Activated T-helper 1 cell treated with anti-CD3 and anti-CD28 coated beads, Interleukin-12 subunit alpha, Interleukin-12 subunit beta, Interleukin-2, Interleukin-4 antibody, amounts not matched to agents 30 ng/mL and 10 ng/mL and 1 ng/mL, durations not matched to agents 14 hours and 24 hours and 36 hours (primary cell): ENCODE measurements at regions of chr16 and their contacts with region 1.

Region 1: DNA sequence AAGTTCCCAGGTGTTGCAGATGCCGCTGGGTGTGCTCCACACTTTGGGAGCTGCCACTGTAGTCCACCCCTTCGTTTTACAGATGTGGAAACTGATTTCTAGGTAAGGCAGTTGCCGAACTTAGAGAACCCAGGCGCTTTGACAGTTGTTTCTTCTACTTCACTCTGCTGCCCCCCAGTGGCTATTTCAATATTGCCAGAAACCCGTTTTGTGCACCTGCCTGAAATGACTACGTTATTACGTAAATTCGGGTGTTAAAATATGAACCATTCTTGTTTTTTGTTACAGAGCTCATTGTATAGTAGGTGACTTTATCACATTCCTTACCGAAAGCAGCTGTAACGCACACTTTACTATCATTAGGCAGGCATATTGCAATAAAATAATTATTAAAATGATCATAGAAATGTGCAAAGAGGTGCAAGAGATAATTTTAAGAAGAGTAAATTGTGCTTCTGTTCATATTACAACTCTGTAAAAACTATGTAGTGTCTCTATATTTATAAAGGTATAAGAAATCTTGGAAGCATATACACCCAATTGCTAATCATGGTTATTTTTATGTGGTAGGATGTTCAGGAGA is 44.9 kb downstream of the OTOA start:
- DNase-seq: peak; percentile 70
- H3K4me3 Mint-ChIP-seq: no peak overlapping the region
- H3K27ac Mint-ChIP-seq: no peak overlapping the region
- H3K4me1 Mint-ChIP-seq: peaks cover 7% of the 10 kb centered on the region
- H3K27me3 Mint-ChIP-seq: peaks cover 9% of the 10 kb centered on the region

Region 2: GRCh38 chr16:21584817-21585216 is 123.8 kb before region 1 on chr16:
- intact Hi-C with region 1: loop called (anchors 1 kb)
- DNase-seq: no peak
- H3K4me3 Mint-ChIP-seq: no peak overlapping the region
- H3K27ac Mint-ChIP-seq: no peak overlapping the region
- H3K4me1 Mint-ChIP-seq: no peaks in the 10 kb centered on the region
- H3K27me3 Mint-ChIP-seq: peaks cover 10% of the 10 kb centered on the region

Region 3: GRCh38 chr16:21599233-21600030 is 109.2 kb before region 1 on chr16 and contains the start of gene METTL9:
- intact Hi-C with region 1: loop called (anchors 5 kb)
- DNase-seq: peak; percentile 95
- H3K4me3 Mint-ChIP-seq: peak within 1 kb of the TSS; percentile 96
- H3K27ac Mint-ChIP-seq: peak within 1 kb of the TSS; percentile 87
- H3K4me1 Mint-ChIP-seq: peaks cover 55% of the 10 kb centered on the region
- H3K27me3 Mint-ChIP-seq: peaks cover 3% of the 10 kb centered on the region
- total RNA-seq, gene METTL9: 58.8 and 64.9 TPM in 2 replicates

Region 4: GRCh38 chr16:21656795-21657768 is 51.5 kb before region 1 on chr16:
- intact Hi-C with region 1: loop called (anchors 1 kb)
- DNase-seq: peak; percentile 32
- H3K4me3 Mint-ChIP-seq: no peak overlapping the region
- H3K27ac Mint-ChIP-seq: no peak overlapping the region
- H3K4me1 Mint-ChIP-seq: peaks cover 33% of the 10 kb centered on the region
- H3K27me3 Mint-ChIP-seq: peaks cover 4% of the 10 kb centered on the region

Region 5: DNA sequence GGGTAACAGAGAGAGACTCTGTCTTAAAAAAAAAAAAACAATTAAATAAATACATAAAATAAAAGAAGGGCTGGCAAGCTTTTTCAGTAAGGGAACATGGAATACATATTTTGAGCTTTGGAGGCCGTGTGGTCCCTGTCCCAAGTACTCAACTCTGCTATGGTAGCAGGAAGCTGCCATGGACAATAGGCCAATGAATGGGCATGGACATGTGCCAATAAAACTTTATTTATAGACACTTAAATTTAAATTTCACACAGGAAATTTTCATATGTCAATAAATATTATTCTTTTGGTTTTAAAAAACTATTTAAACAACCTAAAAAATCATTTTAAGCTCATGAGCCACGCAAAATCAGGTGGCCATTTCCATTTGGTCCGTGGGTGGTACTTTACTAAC is 41.0 kb before region 1 on chr16:
- intact Hi-C with region 1: no loop called
- DNase-seq: no peak
- H3K4me3 Mint-ChIP-seq: no peak overlapping the region
- H3K27ac Mint-ChIP-seq: no peak overlapping the region
- H3K4me1 Mint-ChIP-seq: peaks cover 4% of the 10 kb centered on the region
- H3K27me3 Mint-ChIP-seq: peaks cover 42% of the 10 kb centered on the region

Region 6: DNA sequence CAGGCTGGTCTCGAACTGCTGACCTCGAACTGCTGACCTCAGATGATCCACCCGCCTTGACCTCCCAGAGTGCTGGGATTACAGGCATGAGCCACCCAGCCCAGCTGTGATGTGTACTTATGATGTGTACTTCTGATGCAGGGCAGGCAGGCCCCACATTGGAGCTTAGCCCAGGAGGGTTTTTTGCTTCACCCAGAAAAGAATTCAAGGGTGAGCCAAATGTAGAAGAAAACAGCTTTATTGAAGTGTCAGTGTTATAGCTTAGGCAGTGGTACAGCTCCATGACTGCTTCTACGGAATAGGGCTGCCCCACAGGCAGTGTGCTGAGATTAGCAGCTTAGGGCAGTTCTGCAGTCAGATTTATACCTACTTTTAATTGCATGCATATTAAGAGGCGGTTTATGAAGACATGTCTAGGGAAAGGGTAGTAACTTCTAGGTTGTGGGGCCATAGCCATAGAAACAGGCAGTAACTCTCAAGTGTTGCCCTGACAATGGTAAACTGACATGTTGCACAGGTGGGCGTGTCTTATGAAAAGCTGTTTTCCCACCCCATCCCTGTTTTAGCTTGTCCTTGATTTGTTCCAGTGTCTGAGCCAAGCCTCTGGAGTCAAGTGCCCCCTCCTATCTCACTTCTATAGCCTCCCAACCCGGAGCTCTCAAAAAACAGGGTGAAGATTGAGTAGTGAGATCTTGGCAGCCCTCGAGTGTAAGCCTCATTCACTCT is 564.4 kb after region 1 on chr16:
- intact Hi-C with region 1: no loop called
- DNase-seq: no peak
- H3K4me3 Mint-ChIP-seq: no peak overlapping the region
- H3K27ac Mint-ChIP-seq: no peak overlapping the region
- H3K4me1 Mint-ChIP-seq: peaks cover 16% of the 10 kb centered on the region
- H3K27me3 Mint-ChIP-seq: no peaks in the 10 kb centered on the region

Region 7: GRCh38 chr16:23060458-23061320 is 1352.1 kb after region 1 on chr16:
- intact Hi-C with region 1: loop called (anchors 10 kb)
- DNase-seq: peak; percentile 20
- H3K4me3 Mint-ChIP-seq: no peak overlapping the region
- H3K27ac Mint-ChIP-seq: no peak overlapping the region
- H3K4me1 Mint-ChIP-seq: peaks cover 6% of the 10 kb centered on the region
- H3K27me3 Mint-ChIP-seq: peaks cover 14% of the 10 kb centered on the region